Prostate gland (tissue), 2 donors: ENCODE measurements at regions of chr1 and their contacts with region 1.

Region 1: GRCh38 chr1:30718636-30719405 is 4.6 kb downstream of the MATN1 start:
- DNase-seq: peak; percentile 98
- H3K4me3 ChIP-seq: peak overlapping the region; percentile 48 to 49
- H3K27ac ChIP-seq: peak overlapping the region; percentile 99 to 100
- H3K4me1 ChIP-seq: peaks cover 6% of the 10 kb centered on the region
- H3K27me3 ChIP-seq: no peaks in the 10 kb centered on the region
- CTCF ChIP-seq: peak; percentile 99
- POLR2A ChIP-seq: peak; percentile 99

Region 2: GRCh38 chr1:30779294-30780071 is 60.7 kb after region 1 on chr1:
- intact Hi-C with region 1: loop called (anchors 1 kb)
- DNase-seq: peak; percentile 71
- H3K4me3 ChIP-seq: no peak overlapping the region
- H3K27ac ChIP-seq: no peak overlapping the region
- H3K4me1 ChIP-seq: no peaks in the 10 kb centered on the region
- H3K27me3 ChIP-seq: no peaks in the 10 kb centered on the region
- CTCF ChIP-seq: peak; percentile 97 to 99 (median 98)
- POLR2A ChIP-seq: no peak